ENCODE measurements at regions of chr17 and their contacts with region 1.

Region 1: DNA sequence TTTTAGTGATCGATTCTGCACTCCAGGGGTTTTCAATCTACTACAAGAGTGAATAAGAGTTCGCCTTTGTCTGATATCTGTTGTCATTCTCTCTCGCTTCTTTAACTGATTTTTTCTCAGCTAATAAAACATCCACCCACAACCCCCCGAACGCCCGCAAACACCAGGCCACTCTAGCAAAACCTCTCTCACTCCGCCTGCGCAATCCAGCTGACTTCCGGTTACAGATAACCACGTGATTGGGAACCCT is 338 bp upstream of the RPL19 start:
- DNase-seq: peak; percentile 89 to 91
- H3K4me3 ChIP-seq: peak overlapping the region; percentile 84
- H3K4me1 ChIP-seq: peaks cover 20% of the 10 kb centered on the region
- H3K27me3 ChIP-seq: no peaks in the 10 kb centered on the region

Region 2: DNA sequence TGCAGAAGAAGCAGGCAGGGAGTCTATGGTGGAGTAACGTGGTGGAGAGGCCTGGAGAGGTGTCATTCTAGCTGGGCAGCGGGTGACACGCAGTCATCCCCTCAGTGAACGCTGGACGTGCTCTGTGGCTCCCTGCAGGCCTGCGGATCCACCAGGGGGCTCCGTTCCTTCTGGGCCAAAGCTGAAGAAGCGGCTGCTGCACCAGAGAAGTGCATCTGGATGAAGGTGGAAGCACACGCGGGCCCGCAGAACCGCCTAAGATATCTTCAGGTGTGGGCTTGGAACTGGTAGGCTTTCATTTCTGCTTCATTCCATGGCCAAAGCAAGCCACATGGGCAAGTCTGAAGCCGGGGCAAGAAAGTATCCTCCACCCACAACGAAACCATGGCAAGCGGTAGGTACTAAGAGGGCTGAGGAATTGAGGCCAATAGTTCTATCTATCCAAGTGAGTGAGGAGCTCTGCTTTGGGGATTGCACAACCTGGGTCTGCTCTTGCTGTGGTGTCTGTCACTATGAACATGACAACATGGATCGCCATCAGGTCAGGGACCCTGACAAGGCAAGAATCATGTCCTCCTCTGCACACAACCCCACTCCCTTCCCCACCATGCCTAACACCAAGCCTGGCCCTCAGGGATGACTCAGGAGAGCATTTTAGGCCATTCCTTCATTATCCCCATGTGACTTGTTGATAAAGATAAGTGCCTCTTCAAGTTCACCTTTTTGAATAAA is 153.6 kb before region 1 on chr17:
- in situ Hi-C with region 1: no loop called
- DNase-seq: peak in 1 of 2 experiments; percentile 26
- H3K4me3 ChIP-seq: no peak overlapping the region
- H3K4me1 ChIP-seq: no peaks in the 10 kb centered on the region
- H3K27me3 ChIP-seq: no peaks in the 10 kb centered on the region

Region 3: GRCh38 chr17:39144416-39144840 is 55.3 kb before region 1 on chr17:
- in situ Hi-C with region 1: no loop called
- DNase-seq: no peak
- H3K4me3 ChIP-seq: no peak overlapping the region
- H3K4me1 ChIP-seq: no peaks in the 10 kb centered on the region
- H3K27me3 ChIP-seq: no peaks in the 10 kb centered on the region

Region 4: GRCh38 chr17:39244600-39245570 is 45.1 kb after region 1 on chr17:
- in situ Hi-C with region 1: loop called (anchors 5 kb)
- DNase-seq: peak; percentile 73 to 93
- H3K4me3 ChIP-seq: no peak overlapping the region
- H3K4me1 ChIP-seq: no peaks in the 10 kb centered on the region
- H3K27me3 ChIP-seq: no peaks in the 10 kb centered on the region

Region 5: GRCh38 chr17:39822051-39822451 is 622.3 kb after region 1 on chr17:
- in situ Hi-C with region 1: no loop called
- DNase-seq: no peak
- H3K4me3 ChIP-seq: no peak overlapping the region
- H3K4me1 ChIP-seq: peaks cover 11% of the 10 kb centered on the region
- H3K27me3 ChIP-seq: no peaks in the 10 kb centered on the region

Measured in HAP-1 (cell line).